Left ventricle myocardium superior (tissue), 1 donor: ENCODE measurements at regions of chr10 and their contacts with region 1.

Region 1: DNA sequence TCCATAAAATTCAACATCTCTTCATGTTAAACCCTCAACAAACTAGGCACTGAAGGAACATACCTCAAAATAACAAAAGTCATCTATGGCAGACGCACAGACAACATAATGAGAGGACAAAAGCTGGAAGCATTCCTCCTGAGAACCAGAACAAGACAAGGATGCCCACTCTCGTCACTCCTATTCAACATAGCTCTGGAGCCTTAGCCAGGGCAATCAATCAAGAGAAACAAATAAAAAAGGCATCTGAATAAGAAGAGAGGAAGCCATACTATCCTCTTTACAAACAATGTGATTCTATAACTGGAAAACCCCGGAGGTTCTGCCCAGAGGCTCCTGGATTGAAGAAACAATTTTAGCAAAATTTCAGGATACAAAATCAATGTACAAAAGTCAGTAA is 251.1 kb downstream of the MALRD1 start:
- DNase-seq: no peak
- ATAC-seq: no peak

Region 2: DNA sequence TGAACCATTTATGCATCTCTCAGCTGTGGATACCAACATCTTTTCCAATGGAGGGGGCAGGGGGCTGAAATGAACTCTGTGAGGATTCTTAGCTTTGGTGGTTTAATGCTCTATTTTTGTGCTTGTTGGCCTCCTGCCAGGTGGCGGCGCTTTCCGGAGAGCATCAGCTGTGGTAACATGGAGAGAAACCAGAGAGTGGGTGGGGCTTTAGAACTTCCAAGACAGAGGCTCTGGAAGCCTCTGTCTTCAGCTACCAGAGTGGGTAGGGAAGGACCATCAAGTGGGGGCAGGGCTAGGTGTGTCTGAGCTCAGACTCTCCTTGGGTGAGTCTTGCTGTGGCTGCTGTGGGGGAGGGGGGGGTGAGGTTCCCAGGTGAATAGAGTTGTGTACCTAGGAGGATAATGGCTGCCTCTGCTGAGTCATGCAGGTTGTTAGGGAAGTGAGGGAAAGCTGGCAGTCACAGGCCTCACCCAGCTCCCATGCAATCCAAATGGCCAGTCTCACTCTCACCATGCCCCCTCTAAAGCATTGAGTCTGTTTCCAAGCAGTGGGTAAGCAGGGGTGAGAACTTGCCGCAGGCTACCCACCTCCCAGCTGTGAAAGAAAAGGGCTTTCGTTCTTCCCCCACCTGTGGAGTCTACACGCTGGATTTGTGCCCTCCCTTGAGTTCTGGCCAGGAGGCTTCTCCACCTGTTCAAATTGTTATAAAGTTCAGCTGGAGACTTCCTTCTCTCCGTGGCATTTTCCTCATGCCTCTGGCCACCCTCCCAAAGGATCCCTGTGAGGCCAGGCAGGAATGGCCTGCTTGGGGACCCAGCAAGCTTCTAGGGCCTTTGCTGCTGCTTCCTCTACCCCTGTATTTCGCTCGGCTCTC is 1070.4 kb after region 1 on chr10:
- intact Hi-C with region 1: loop called (anchors 5 kb)
- DNase-seq: no peak
- ATAC-seq: no peak